ENCODE measurements at regions of chr10 and their contacts with region 1.

Region 1: GRCh38 chr10:98170249-98171117 is 36.0 kb downstream of the R3HCC1L start:
- DNase-seq: peak; percentile 51
- H3K4me3 ChIP-seq: no peak overlapping the region
- H3K27ac ChIP-seq: no peak overlapping the region
- H3K4me1 ChIP-seq: peaks cover 5% of the 10 kb centered on the region
- H3K27me3 ChIP-seq: no peaks in the 10 kb centered on the region
- CTCF ChIP-seq: peak; percentile 77

Region 2: DNA sequence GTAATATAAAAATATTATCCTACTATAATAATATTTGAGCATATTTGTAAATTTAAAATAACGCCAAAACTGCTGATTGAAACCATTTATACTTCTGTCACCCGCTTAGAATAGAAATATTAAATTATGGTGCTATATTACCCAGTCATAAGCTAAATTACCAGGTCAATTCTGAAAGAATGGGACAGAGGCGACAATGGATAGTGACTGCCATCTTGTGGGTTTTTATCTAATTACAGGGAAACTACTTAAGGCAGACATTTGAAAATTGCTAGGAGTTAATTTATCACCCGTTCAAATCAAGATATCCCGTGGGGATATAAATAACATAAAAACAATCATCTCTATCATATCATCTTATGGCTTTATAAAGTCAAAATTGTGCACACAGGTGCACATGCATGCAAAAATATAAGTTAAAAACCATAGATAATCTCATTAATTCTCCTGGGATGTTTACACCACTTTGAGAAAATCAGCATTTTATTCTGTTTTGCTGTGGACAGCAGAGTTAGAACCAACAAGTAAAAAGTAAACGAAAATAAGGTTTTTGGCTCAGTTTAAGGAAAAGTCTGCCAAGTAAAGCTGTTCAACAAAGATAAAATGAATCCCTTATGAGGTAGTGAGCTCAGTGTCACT is 1106.5 kb after region 1 on chr10:
- CTCF ChIA-PET with region 1: no interaction called
- POLR2A ChIA-PET with region 1: no interaction called
- intact Hi-C with region 1: loop called (anchors 10 kb)
- DNase-seq: peak; percentile 37
- H3K4me3 ChIP-seq: no peak overlapping the region
- H3K27ac ChIP-seq: no peak overlapping the region
- H3K4me1 ChIP-seq: no peaks in the 10 kb centered on the region
- H3K27me3 ChIP-seq: peaks cover 30% of the 10 kb centered on the region
- CTCF ChIP-seq: peak; percentile 67